CD4-positive, alpha-beta memory T cell (primary cell): ENCODE measurements at regions of chr11 and their contacts with region 1.

Region 1: DNA sequence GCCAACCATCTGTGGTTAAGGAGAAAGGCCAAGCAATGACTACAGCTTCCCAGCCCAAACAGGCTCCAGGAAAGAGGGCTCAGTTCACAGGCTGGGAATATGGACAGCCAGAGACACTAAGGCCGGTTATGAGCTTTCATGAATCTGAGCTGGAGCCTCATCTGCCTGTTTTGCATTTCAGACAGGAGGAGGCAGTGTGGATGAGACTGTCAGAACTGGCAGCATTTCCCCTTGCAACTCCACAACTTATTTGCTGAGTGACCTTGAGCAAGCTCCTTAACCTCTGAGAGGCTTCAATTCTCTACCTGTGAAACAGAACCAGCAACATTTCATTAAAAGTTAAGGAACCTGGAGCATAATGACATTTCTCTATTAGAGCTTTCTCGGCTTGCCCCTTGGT is 264.0 kb downstream of the ETS1 start:
- DNase-seq: peak; percentile 60 to 70 (median 68)
- H3K4me3 ChIP-seq: peak overlapping the region in 1 of 2 donors; percentile 17
- H3K4me3 Mint-ChIP-seq: peak overlapping the region in 7 of 8 donors; percentile 28 to 78 (median 63)
- H3K27ac ChIP-seq: peak overlapping the region; percentile 92
- H3K27ac Mint-ChIP-seq: peak overlapping the region; percentile 87 to 99 (median 97)
- H3K4me1 ChIP-seq: peaks cover 83% of the 10 kb centered on the region
- H3K4me1 Mint-ChIP-seq: peaks cover 65 to 92% (median 79%) of the 10 kb centered on the region in 4 donors
- H3K27me3 ChIP-seq: no peaks in the 10 kb centered on the region
- H3K27me3 Mint-ChIP-seq: no peaks in the 10 kb centered on the region

Region 2: DNA sequence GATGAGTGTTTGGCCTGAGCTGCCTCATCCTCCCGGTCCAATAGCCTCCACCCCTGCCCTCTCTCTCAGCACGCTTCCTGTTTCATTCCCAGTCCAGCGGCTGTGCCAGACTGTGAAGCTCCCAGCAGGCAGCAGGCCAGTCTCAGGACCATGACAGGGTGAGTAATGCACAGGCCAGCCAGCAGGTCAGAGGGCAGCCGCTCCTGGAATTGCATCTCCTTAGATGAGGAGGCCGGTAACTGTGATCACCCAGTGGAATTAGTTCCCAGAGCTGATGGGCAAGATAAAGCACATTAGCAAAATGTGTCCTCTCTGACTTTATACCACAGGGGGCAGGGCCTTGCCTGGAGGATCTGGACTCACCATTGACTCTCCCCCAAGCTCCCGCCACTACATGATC is 12.8 kb after region 1 on chr11:
- CTCF ChIA-PET with region 1: interaction called, 19 read pairs
- POLR2A ChIA-PET with region 1: interaction called, 137 read pairs
- intact Hi-C with region 1: loop called (anchors 1 kb)
- DNase-seq: no peak
- H3K4me3 ChIP-seq: no peak overlapping the region
- H3K4me3 Mint-ChIP-seq: no peak overlapping the region
- H3K27ac ChIP-seq: no peak overlapping the region
- H3K27ac Mint-ChIP-seq: peak overlapping the region in 4 of 7 donors; percentile 2 to 76 (median 58)
- H3K4me1 ChIP-seq: peaks cover 37% of the 10 kb centered on the region
- H3K4me1 Mint-ChIP-seq: peaks cover 40 to 75% (median 57%) of the 10 kb centered on the region in 4 donors
- H3K27me3 ChIP-seq: no peaks in the 10 kb centered on the region
- H3K27me3 Mint-ChIP-seq: no peaks in the 10 kb centered on the region

Region 3: DNA sequence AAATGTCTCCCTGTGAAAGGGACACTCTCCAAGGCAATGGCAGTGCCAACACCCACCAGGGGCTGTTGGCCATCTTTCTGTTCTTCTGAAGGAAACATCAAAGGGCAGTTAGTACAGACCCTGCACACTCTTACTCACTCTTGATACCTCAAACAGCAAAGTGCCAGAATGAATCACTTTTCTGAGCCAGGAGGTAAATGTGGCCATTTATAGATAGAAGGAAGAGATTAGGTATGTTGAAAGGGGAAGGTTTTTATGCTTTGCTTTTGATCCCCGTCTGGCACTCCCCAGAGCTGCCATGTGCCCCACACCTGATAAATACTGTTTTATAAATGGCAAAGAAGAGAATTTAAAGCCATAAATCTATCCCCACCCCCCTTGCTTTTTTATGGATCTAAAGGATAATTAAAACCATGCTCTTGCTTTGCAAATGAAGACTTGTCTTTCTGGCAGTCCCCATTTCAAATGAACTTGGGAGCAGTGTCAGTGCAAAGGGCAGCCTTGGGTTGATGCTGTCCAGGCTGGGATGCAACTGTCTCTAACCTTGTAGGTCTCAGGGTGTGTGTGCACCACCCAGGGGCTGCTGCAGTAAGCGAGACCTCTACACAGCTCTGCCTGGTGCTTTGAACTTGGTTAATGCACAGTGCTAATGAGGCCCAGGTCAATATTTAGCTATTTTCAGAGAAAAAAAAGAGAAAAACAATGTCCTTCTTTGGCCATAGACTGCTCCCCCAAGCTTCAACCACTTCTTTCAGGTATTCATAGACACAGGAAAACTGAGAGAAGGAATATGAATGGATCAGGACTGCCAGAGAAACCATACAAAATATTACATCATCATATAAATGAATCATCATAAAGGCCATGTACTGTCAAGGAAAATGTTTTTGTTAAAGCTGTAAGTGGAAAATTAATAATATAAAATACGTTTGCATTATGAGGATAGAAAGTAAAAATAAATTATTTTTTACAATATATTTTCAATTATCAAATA is 56.5 kb after region 1 on chr11:
- CTCF ChIA-PET with region 1: interaction called, 5 read pairs
- POLR2A ChIA-PET with region 1: interaction called, 6 read pairs
- intact Hi-C with region 1: loop called (anchors 1 kb)
- DNase-seq: peak; percentile 34 to 70 (median 37)
- H3K4me3 ChIP-seq: no peak overlapping the region
- H3K4me3 Mint-ChIP-seq: peak overlapping the region in 5 of 8 donors; percentile 12 to 67 (median 42)
- H3K27ac ChIP-seq: no peak overlapping the region
- H3K27ac Mint-ChIP-seq: peak overlapping the region; percentile 65 to 90 (median 88)
- H3K4me1 ChIP-seq: peaks cover 32% of the 10 kb centered on the region
- H3K4me1 Mint-ChIP-seq: peaks cover 31 to 50% (median 35%) of the 10 kb centered on the region in 4 donors
- H3K27me3 ChIP-seq: no peaks in the 10 kb centered on the region
- H3K27me3 Mint-ChIP-seq: no peaks in the 10 kb centered on the region

Region 4: DNA sequence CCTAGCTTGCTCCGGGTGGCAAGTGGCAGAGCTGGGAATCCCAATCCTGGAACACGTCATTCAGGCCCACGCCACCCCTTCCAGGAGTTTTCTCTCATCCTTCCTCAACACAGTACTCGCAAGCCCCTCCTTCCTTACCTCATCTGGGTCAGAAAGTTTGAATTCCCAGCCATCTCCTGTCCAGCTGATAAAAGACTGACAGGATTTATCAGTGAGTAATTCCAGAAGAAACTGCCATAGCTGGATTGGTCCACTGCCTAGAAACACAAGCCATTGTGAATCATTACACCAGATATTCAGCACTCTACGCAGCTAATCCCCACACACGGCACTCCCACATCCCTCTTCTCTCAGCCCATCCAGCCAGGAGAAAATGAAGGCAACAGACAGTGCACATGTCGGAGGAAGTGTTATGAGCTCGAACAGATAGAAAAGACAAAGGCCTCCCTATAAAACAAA is 140.0 kb after region 1 on chr11:
- CTCF ChIA-PET with region 1: interaction called, 13 read pairs
- POLR2A ChIA-PET with region 1: interaction called, 436 read pairs
- intact Hi-C with region 1: no loop called
- DNase-seq: no peak
- H3K4me3 ChIP-seq: peak overlapping the region in 1 of 2 donors; percentile 3
- H3K4me3 Mint-ChIP-seq: peak overlapping the region; percentile 26 to 93 (median 78)
- H3K27ac ChIP-seq: peak overlapping the region; percentile 94
- H3K27ac Mint-ChIP-seq: peak overlapping the region; percentile 98 to 99 (median 99)
- H3K4me1 ChIP-seq: peaks cover 93% of the 10 kb centered on the region
- H3K4me1 Mint-ChIP-seq: peaks cover 76 to 95% (median 86%) of the 10 kb centered on the region in 4 donors
- H3K27me3 ChIP-seq: no peaks in the 10 kb centered on the region
- H3K27me3 Mint-ChIP-seq: no peaks in the 10 kb centered on the region

Region 5: GRCh38 chr11:128488471-128488870 is 165.1 kb after region 1 on chr11:
- CTCF ChIA-PET with region 1: interaction called, 18 read pairs
- POLR2A ChIA-PET with region 1: interaction called, 37 read pairs
- intact Hi-C with region 1: no loop called
- DNase-seq: peak in 1 of 5 donors; percentile 85
- H3K4me3 ChIP-seq: peak overlapping the region in 1 of 2 donors; percentile 11
- H3K4me3 Mint-ChIP-seq: peak overlapping the region; percentile 10 to 81 (median 68)
- H3K27ac ChIP-seq: peak overlapping the region; percentile 89
- H3K27ac Mint-ChIP-seq: peak overlapping the region; percentile 90 to 99 (median 97)
- H3K4me1 ChIP-seq: peaks cover 99% of the 10 kb centered on the region
- H3K4me1 Mint-ChIP-seq: peaks cover 92 to 99% (median 95%) of the 10 kb centered on the region in 4 donors
- H3K27me3 ChIP-seq: no peaks in the 10 kb centered on the region
- H3K27me3 Mint-ChIP-seq: no peaks in the 10 kb centered on the region

Region 6: GRCh38 chr11:128624269-128625175 is 301.1 kb after region 1 on chr11:
- CTCF ChIA-PET with region 1: interaction called, 88 read pairs
- POLR2A ChIA-PET with region 1: interaction called, 35 read pairs
- intact Hi-C with region 1: no loop called
- DNase-seq: peak; percentile 69 to 83 (median 77)
- H3K4me3 ChIP-seq: peak overlapping the region in 1 of 2 donors; percentile 28
- H3K4me3 Mint-ChIP-seq: peak overlapping the region; percentile 67 to 91 (median 80)
- H3K27ac ChIP-seq: peak overlapping the region; percentile 67
- H3K27ac Mint-ChIP-seq: peak overlapping the region; percentile 96 to 98 (median 97)
- H3K4me1 ChIP-seq: peaks cover 85% of the 10 kb centered on the region
- H3K4me1 Mint-ChIP-seq: peaks cover 76 to 100% (median 89%) of the 10 kb centered on the region in 4 donors
- H3K27me3 ChIP-seq: no peaks in the 10 kb centered on the region
- H3K27me3 Mint-ChIP-seq: no peaks in the 10 kb centered on the region